Psoas muscle (tissue), 8 donors: ENCODE measurements at regions of chr5 and their contacts with region 1.

Region 1: DNA sequence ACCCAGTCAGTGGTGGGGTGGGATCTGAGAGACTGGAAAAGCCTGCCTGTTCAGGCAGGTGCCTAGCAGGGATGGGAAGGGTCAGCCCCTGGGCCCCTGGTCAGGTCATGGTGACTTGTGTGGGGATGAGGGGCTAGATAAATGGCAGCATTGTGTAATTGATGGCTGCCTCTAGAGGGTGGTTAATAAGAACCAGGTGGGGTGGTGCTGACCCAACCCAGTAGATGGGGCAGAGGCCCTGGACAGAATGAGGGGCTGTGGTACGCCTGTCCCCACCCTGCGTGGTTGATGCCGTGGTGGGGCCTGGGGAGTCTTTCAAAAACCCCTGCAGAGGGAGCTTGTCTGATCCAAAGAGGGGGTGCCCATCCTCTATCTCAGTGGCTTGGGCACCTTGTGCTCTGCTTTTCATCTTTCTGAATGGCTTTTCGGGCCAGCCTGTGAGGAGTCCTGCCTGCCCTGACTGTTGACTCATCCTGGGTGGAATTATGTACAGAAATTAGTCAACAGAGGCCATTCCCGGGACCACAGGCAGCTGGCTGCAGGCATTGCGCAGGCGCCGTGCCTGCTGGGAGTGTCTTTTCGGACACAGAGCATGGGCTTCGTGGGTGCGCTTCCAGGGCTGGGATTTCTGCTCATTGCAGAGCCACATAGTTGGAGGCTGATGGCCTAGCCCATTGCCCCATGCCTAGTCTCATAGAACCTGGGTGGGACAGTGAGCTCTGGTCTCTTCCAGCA is 93.6 kb upstream of the PITX1 start:
- DNase-seq: peak in 1 of 2 donors; percentile 60
- ATAC-seq: no peak
- H3K4me3 ChIP-seq: no peak overlapping the region
- H3K27ac ChIP-seq: no peak overlapping the region
- H3K4me1 ChIP-seq: no peaks in the 10 kb centered on the region
- H3K27me3 ChIP-seq: no peaks in the 10 kb centered on the region
- CTCF ChIP-seq: no peak

Region 2: GRCh38 chr5:134465816-134466240 is 661.8 kb before region 1 on chr5:
- intact Hi-C with region 1: no loop called
- DNase-seq: peak; percentile 92 to 95
- ATAC-seq: peak; percentile 82 to 88 (median 86)
- H3K4me3 ChIP-seq: peak overlapping the region; percentile 69
- H3K27ac ChIP-seq: peak overlapping the region; percentile 94
- H3K4me1 ChIP-seq: peaks cover 38% of the 10 kb centered on the region
- H3K27me3 ChIP-seq: no peaks in the 10 kb centered on the region
- CTCF ChIP-seq: no peak

Region 3: GRCh38 chr5:135174315-135175096 is 46.8 kb after region 1 on chr5:
- intact Hi-C with region 1: no loop called
- DNase-seq: no peak
- ATAC-seq: peak in 1 of 4 donors; percentile 70
- H3K4me3 ChIP-seq: no peak overlapping the region
- H3K27ac ChIP-seq: no peak overlapping the region
- H3K4me1 ChIP-seq: no peaks in the 10 kb centered on the region
- H3K27me3 ChIP-seq: no peaks in the 10 kb centered on the region
- CTCF ChIP-seq: peak; percentile 13

Region 4: DNA sequence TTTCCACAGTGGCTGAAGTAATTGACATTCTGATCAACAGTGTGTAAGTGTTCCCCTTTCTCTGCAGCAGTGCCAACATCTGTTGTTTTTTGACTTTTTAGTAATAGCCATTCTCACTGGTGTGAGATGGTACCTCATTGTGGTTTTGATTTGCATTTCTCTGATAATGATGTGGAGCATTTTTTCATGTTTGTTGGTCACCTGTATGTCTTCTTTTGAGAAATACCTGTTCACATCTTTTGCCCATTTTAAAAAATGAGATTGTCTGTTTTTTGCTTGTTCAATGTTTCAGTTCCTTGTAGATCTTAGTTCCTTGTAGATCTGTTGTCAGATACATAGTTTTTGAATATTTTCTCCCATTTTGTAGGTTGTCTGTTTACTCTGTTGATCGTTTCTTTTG is 68.8 kb after region 1 on chr5:
- intact Hi-C with region 1: loop called in 1 of 2 experiments (anchors 2 kb)
- DNase-seq: no peak
- ATAC-seq: no peak
- H3K4me3 ChIP-seq: no peak overlapping the region
- H3K27ac ChIP-seq: no peak overlapping the region
- H3K4me1 ChIP-seq: peaks cover 3% of the 10 kb centered on the region
- H3K27me3 ChIP-seq: no peaks in the 10 kb centered on the region
- CTCF ChIP-seq: no peak